KBM-7 (cell line): ENCODE measurements at regions of chr21 and their contacts with region 1.

Region 1: DNA sequence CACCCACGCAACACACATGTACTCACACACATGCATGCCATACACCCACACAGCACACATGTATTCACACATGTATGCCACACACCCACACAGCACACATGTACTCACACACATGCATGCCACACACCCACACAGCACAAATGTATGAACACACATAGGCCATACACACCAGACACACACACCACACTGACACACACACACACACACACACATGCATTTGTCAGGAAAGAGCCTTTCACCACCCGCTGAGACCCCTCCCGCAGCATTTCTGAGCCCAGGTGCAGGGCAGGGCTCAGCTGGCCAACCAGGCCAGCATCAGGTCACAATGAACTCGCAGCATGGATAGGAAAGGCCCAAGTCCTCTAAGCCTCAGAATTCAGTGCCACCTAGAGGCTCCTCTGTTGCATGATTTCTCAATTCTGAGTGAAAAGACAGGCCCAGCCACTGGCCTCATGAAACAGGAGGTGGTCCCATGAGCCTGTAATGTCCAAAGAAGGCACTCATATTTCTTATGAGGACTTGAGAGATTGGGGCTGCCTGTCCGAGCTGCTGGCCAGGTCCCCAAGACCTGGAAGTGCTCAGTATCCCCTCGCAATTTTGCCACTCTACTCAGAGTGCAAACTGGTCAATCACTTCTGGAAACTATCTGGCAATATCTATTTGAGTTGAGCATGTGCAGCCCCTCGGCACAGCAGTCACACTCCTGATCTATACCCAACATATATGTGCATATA is 57.3 kb downstream of the PSMG1 start:
- DNase-seq: peak; percentile 75

Region 2: GRCh38 chr21:38219049-38219628 is 906.8 kb before region 1 on chr21:
- in situ Hi-C with region 1: loop called (anchors 25 kb)
- DNase-seq: peak; percentile 88

Region 3: DNA sequence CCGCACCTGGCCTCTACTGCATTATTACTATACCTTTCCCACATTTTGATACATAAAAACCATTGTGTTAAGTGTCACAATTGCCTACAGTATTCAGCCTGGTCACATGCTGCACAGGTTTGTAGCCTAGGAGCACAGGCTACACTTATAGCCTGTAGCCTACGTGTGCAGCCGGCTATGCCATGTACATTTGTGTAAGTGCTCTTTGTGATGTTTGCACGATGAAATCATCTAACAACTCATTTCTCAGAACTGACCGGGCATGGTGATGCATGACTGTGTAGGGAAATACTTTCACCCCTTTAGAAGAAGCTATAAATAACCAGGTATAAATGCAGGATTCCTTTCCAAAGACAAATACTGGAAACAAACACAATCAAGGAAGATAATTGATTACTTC is 639.7 kb before region 1 on chr21:
- in situ Hi-C with region 1: loop called (anchors 25 kb)
- DNase-seq: no peak

Region 4: GRCh38 chr21:38733973-38734546 is 391.9 kb before region 1 on chr21:
- in situ Hi-C with region 1: loop called (anchors 25 kb)
- DNase-seq: peak; percentile 71

Region 5: GRCh38 chr21:39016740-39017315 is 109.1 kb before region 1 on chr21:
- in situ Hi-C with region 1: no loop called
- DNase-seq: peak; percentile 80

Region 6: DNA sequence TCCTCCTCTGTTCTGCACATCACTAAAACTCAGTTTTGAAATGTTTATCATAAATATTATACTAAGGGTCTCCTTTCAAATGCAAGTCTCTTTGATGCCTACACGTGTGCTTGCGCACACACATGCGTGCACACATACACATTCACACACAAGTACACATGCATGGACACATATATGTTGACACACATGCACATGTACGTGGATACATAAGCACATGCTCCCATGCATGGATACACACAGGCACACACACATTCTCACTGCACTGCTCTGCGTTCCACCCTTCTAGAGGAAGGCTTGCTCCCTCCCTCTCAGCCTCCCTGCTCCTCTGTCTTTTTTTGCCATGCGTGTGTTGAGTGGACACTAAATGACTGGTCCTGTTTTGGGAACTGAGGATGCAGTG is 904.0 kb after region 1 on chr21:
- in situ Hi-C with region 1: no loop called
- DNase-seq: no peak